ENCODE measurements at regions of chr11 and their contacts with region 1.

Region 1: GRCh38 chr11:87097582-87097981 is 59.8 kb downstream of the TMEM135 start:
- DNase-seq: peak; percentile 40
- H3K4me3 Mint-ChIP-seq: no peak overlapping the region
- H3K27ac Mint-ChIP-seq: no peak overlapping the region
- H3K4me1 Mint-ChIP-seq: peaks cover 6% of the 10 kb centered on the region
- H3K27me3 Mint-ChIP-seq: no peaks in the 10 kb centered on the region
- CTCF ChIP-seq: peak; percentile 39

Region 2: GRCh38 chr11:86938900-86939880 is 158.4 kb before region 1 on chr11:
- CTCF ChIA-PET with region 1: no interaction called
- intact Hi-C with region 1: loop called (anchors 2 kb)
- DNase-seq: no peak
- H3K4me3 Mint-ChIP-seq: no peak overlapping the region
- H3K27ac Mint-ChIP-seq: no peak overlapping the region
- H3K4me1 Mint-ChIP-seq: peaks cover 20% of the 10 kb centered on the region
- H3K27me3 Mint-ChIP-seq: no peaks in the 10 kb centered on the region
- CTCF ChIP-seq: no peak

Region 3: GRCh38 chr11:86990515-86990914 is 107.1 kb before region 1 on chr11:
- CTCF ChIA-PET with region 1: interaction called, 3 read pairs
- intact Hi-C with region 1: loop called (anchors 10 kb)
- DNase-seq: peak; percentile 3
- H3K4me3 Mint-ChIP-seq: no peak overlapping the region
- H3K27ac Mint-ChIP-seq: no peak overlapping the region
- H3K4me1 Mint-ChIP-seq: no peaks in the 10 kb centered on the region
- H3K27me3 Mint-ChIP-seq: no peaks in the 10 kb centered on the region
- CTCF ChIP-seq: no peak

Region 4: GRCh38 chr11:87083029-87083428 is 14.6 kb before region 1 on chr11:
- CTCF ChIA-PET with region 1: no interaction called
- intact Hi-C with region 1: loop called (anchors 2 kb)
- DNase-seq: no peak
- H3K4me3 Mint-ChIP-seq: no peak overlapping the region
- H3K27ac Mint-ChIP-seq: no peak overlapping the region
- H3K4me1 Mint-ChIP-seq: no peaks in the 10 kb centered on the region
- H3K27me3 Mint-ChIP-seq: no peaks in the 10 kb centered on the region
- CTCF ChIP-seq: no peak

Region 5: DNA sequence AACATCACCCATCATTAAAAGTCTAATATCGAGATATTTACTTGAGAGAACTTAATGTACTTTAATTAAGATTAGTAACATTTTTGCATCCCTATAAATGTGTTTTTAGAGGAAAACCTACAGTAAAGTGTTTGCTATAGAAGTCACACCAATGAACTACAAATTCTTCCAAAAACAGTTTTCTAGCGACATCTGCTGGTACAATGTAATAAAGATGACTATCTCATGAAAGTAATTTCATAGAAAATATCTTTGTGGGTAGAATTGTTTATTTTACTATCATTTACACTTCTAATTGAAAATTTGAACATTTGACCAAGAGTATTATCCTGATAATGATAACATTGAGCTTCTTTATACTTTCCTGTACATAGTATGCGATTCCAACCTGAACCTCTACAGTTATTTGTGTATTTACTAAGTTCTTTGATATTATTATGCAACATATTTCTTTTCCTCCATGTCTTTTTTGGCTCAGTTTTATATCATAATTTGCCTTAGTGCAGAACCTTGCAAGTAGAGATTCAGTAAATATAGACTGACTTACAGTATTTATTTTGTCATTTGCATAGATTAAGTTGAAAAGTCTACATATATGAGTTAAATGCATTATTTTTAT is 192.8 kb after region 1 on chr11:
- CTCF ChIA-PET with region 1: no interaction called
- intact Hi-C with region 1: loop called (anchors 2 kb)
- DNase-seq: no peak
- H3K4me3 Mint-ChIP-seq: no peak overlapping the region
- H3K27ac Mint-ChIP-seq: no peak overlapping the region
- H3K4me1 Mint-ChIP-seq: no peaks in the 10 kb centered on the region
- H3K27me3 Mint-ChIP-seq: no peaks in the 10 kb centered on the region
- CTCF ChIP-seq: peak; percentile 28

Measured in Calu3 (cell line).